Activated CD4-positive, alpha-beta T cell treated with anti-CD3 and anti-CD28 coated beads, Interleukin-2, amount 10 ng/mL, durations not matched to agents 24 days and 14 days (primary cell): ENCODE measurements at regions of chr5 and their contacts with region 1.

Region 1: DNA sequence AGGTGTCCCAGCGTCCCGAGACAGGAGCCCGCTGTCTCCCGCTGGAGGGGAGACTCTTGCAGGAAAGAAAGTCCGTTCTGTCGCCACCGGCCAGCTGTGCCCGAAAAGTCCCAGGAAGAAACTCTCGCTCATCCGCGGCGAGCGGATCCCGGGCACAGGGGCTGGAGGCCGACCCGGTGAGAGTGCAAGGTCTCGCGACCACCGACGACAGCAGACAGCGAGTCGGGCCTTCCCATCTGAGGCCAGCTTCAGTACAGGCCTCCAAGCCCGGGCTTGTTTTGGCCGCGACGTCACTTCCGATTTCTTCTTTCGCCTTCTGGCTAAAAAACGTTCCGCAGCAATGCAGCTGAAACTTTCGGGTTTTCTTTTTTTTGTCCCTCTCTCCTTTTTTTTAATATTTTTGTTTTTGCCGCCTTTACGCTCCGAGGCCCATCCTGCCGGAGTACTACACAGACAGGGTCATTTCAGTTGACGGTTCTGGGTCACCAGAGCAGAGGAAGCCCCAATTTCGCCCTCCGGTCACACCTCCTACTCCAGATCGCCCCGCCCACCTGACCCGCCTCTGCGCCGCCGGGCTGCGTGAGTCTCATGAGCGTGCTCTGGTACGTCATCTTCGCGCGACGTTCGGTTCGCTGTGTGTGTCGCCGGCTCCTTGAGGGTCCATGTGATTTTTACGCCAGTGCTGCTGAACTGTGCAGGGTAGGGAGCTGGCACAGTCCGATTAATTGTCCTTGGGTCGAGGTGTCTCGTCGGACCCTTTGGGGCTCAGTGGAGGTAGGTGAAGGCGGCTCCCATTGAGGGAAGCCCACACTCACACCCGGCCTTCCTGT is at the starts of genes ANKRA2 and UTP15:
- DNase-seq: peak; percentile 100
- H3K4me3 Mint-ChIP-seq: peak within 1 kb of the TSS; percentile 100
- H3K27ac Mint-ChIP-seq: peak within 1 kb of the TSS; percentile 100
- H3K4me1 Mint-ChIP-seq: peaks cover 33% of the 10 kb centered on the region
- H3K27me3 Mint-ChIP-seq: peaks cover 2% of the 10 kb centered on the region
- total RNA-seq, gene ANKRA2: 18.5 and 19.7 TPM in 2 replicates
- total RNA-seq, gene UTP15: 59.3 and 61.5 TPM in 2 replicates

Region 2: GRCh38 chr5:71586941-71587765 is 1978.2 kb before region 1 on chr5 and contains the start of gene MCCC2:
- intact Hi-C with region 1: loop called (anchors 2 kb)
- DNase-seq: peak; percentile 99
- H3K4me3 Mint-ChIP-seq: peak within 1 kb of the TSS; percentile 89
- H3K27ac Mint-ChIP-seq: peak within 1 kb of the TSS; percentile 99
- H3K4me1 Mint-ChIP-seq: peaks cover 31% of the 10 kb centered on the region
- H3K27me3 Mint-ChIP-seq: no peaks in the 10 kb centered on the region
- total RNA-seq, gene MCCC2: 58.7 and 58.9 TPM in 2 replicates

Region 3: DNA sequence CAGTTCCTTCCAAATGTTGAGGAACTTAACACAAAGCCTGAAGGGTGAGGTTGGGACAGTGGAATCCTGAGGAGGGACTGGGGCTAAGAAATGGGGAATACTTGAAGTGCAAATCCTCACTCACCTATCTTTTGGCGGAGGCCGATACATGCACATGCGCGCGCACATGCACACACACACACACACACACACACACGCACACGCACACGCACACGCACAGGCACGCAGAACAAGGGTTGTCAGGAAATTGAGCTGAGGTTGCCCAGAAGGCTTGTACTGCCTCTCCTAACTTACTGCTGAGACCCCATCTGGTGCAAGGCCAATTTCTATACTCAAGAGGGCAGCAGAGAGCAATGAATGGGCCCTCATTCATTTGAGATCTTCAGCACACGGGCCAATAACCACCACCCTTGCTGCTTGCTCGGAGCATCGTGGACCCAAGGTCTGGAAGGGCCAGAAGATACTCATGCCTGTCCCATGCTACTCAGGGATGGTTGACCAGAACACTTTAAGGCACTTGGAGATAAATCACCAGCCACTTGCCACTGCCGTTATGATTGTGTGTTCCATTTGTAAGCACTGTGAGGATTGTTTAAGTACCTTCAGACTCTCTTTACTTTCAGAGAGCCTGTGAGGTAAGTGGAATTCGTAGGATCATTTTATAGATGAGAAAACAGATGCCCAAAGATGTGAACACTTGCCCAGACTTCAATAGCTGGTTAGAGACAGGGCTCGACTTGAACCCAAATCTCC is 45.6 kb before region 1 on chr5:
- intact Hi-C with region 1: loop called (anchors 1 kb)
- DNase-seq: peak; percentile 93
- H3K4me3 Mint-ChIP-seq: peak overlapping the region; percentile 34
- H3K27ac Mint-ChIP-seq: no peak overlapping the region
- H3K4me1 Mint-ChIP-seq: peaks cover 8% of the 10 kb centered on the region
- H3K27me3 Mint-ChIP-seq: no peaks in the 10 kb centered on the region

Region 4: GRCh38 chr5:74684900-74685851 is 1119.8 kb after region 1 on chr5 and contains the start of gene HEXB:
- intact Hi-C with region 1: loop called (anchors 1 kb)
- DNase-seq: peak; percentile 96
- H3K4me3 Mint-ChIP-seq: peak within 1 kb of the TSS; percentile 90
- H3K27ac Mint-ChIP-seq: peak within 1 kb of the TSS; percentile 83
- H3K4me1 Mint-ChIP-seq: peaks cover 20% of the 10 kb centered on the region
- H3K27me3 Mint-ChIP-seq: peaks cover 13% of the 10 kb centered on the region
- total RNA-seq, gene HEXB: 60.7 and 61.2 TPM in 2 replicates

Region 5: GRCh38 chr5:75236322-75237316 is 1671.3 kb after region 1 on chr5 and contains the start of gene ANKRD31:
- intact Hi-C with region 1: loop called (anchors 10 kb)
- DNase-seq: peak; percentile 97
- H3K4me3 Mint-ChIP-seq: peak within 1 kb of the TSS; percentile 96
- H3K27ac Mint-ChIP-seq: peak within 1 kb of the TSS; percentile 93
- H3K4me1 Mint-ChIP-seq: peaks cover 13% of the 10 kb centered on the region
- H3K27me3 Mint-ChIP-seq: no peaks in the 10 kb centered on the region
- total RNA-seq, gene ANKRD31: 0.33 and 0.47 TPM in 2 replicates